ENCODE measurements at regions of chrX and their contacts with region 1.

Region 1: GRCh38 chrX:77415161-77415560 is 32.0 kb upstream of the FGF16 start:
- DNase-seq: no peak
- ATAC-seq: no peak
- H3K4me3 ChIP-seq: no peak overlapping the region
- H3K27ac ChIP-seq: no peak overlapping the region
- H3K4me1 ChIP-seq: no peaks in the 10 kb centered on the region
- H3K27me3 ChIP-seq: no peaks in the 10 kb centered on the region
- CTCF ChIP-seq: no peak
- POLR2A ChIP-seq: no peak
- RAD21 ChIP-seq: no peak

Region 2: GRCh38 chrX:77347572-77347971 is 67.6 kb before region 1 on chrX:
- CTCF ChIA-PET with region 1: no interaction called
- POLR2A ChIA-PET with region 1: no interaction called
- dilution Hi-C with region 1: no loop called
- in situ Hi-C with region 1: loop called (anchors 10 kb)
- intact Hi-C with region 1: no loop called
- DNase-seq: no peak
- ATAC-seq: no peak
- H3K4me3 ChIP-seq: no peak overlapping the region
- H3K27ac ChIP-seq: no peak overlapping the region
- H3K4me1 ChIP-seq: no peaks in the 10 kb centered on the region
- H3K27me3 ChIP-seq: no peaks in the 10 kb centered on the region
- CTCF ChIP-seq: no peak
- POLR2A ChIP-seq: no peak
- RAD21 ChIP-seq: no peak

Region 3: GRCh38 chrX:77404419-77404818 is 10.7 kb before region 1 on chrX:
- CTCF ChIA-PET with region 1: no interaction called
- POLR2A ChIA-PET with region 1: interaction called, 10 read pairs
- dilution Hi-C with region 1: no loop called
- in situ Hi-C with region 1: no loop called
- intact Hi-C with region 1: no loop called
- DNase-seq: no peak
- ATAC-seq: no peak
- H3K4me3 ChIP-seq: no peak overlapping the region
- H3K27ac ChIP-seq: no peak overlapping the region
- H3K4me1 ChIP-seq: no peaks in the 10 kb centered on the region
- H3K27me3 ChIP-seq: no peaks in the 10 kb centered on the region; the same call in 1 of the 2 replicates
- CTCF ChIP-seq: no peak
- POLR2A ChIP-seq: no peak
- RAD21 ChIP-seq: no peak

Measured in IMR-90 (cell line).